ENCODE measurements at regions of chr7 and their contacts with region 1.

Region 1: DNA sequence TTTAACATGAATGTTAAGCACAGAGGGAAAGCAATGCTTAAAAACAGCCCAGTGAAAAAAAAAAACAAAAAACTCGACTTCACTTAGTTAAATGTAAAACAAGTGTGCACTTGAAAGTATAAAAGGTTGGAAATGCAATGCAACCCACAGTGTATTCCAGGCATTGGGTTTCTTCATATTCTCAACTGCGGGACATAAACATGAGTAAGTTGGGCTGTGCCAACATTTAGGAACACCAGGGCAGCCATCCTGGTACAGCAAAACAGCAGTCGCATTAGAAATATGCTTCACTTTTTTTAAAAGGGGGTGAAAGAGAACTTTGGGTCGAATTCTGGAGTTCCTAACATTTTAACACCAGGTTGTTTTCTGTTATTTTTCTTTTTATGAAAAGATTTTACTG is 937 bp downstream of the STEAP1 start:
- DNase-seq: no peak
- ATAC-seq: no peak
- H3K4me3 ChIP-seq: peak overlapping the region; percentile 53
- H3K27ac ChIP-seq: peak overlapping the region; percentile 79 to 94; a peak in 3 of 6 replicates
- H3K4me1 ChIP-seq: peaks cover 5% of the 10 kb centered on the region; the same call in 1 of the 3 replicates
- CTCF ChIP-seq: no peak
- EP300 ChIP-seq: no peak
- POLR2A ChIP-seq: no peak
- RAD21 ChIP-seq: no peak

Region 2: GRCh38 chr7:90178679-90179278 is 23.6 kb after region 1 on chr7:
- CTCF ChIA-PET with region 1: interaction called, 10 read pairs
- POLR2A ChIA-PET with region 1: interaction called, 5 read pairs
- DNase-seq: peak; percentile 25 to 60
- ATAC-seq: peak; percentile 86 to 91
- H3K4me3 ChIP-seq: no peak overlapping the region
- H3K27ac ChIP-seq: peak overlapping the region; percentile 67 to 85
- H3K4me1 ChIP-seq: peaks cover 45% of the 10 kb centered on the region
- CTCF ChIP-seq: no peak
- EP300 ChIP-seq: no peak
- POLR2A ChIP-seq: no peak
- RAD21 ChIP-seq: no peak

Region 3: GRCh38 chr7:90211391-90212148 is 56.4 kb after region 1 on chr7 and contains the start of gene STEAP2:
- CTCF ChIA-PET with region 1: interaction called, 38 read pairs
- POLR2A ChIA-PET with region 1: interaction called, 20 read pairs
- DNase-seq: peak; percentile 82 to 94
- ATAC-seq: peak; percentile 98
- H3K4me3 ChIP-seq: peak within 1 kb of the TSS; percentile 74
- H3K27ac ChIP-seq: peak within 1 kb of the TSS; percentile 95 to 97
- H3K4me1 ChIP-seq: peaks cover 13% of the 10 kb centered on the region; the same call in 1 of the 3 replicates
- CTCF ChIP-seq: peak; percentile 38; the same call in 2 of the 3 replicates
- EP300 ChIP-seq: no peak
- POLR2A ChIP-seq: peak; percentile 65
- RAD21 ChIP-seq: peak; percentile 34 to 60; a peak in 4 of 5 replicates
- polyA plus RNA-seq, gene STEAP2: 49.2 and 51.9 TPM in 2 replicates

Region 4: DNA sequence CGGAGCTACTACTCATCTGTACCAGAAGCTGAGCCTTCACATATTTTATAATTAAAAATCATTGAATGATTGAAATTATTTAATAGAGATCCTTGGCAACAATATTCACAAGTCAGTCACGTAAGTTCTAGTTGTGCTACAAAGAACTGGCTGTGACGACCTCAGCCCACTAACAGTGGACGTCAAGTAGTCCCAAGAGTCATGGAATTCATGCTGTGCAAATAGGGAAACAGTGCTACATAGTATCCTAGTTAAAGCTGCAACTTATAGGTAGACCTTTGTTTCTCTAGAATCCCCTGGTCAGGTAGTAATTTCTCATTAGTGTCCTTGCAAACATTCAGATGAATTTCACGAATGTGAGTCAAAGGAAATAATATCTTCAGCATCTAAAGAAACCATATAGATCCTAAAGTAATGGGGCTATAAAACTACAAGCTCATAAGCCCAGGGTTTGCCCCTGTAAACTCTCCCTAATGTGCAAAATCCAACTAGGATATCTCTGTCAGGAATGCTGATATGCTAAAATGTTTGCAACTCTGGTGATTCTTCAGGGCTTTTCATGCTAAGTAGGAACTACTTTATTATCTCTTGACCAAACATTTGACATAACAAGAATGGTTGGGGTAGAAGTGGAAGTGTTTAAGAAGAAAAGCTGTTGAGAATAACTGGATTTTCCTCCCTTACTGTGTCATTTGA is 121.0 kb after region 1 on chr7:
- CTCF ChIA-PET with region 1: interaction called, 14 read pairs
- POLR2A ChIA-PET with region 1: no interaction called
- DNase-seq: no peak
- ATAC-seq: no peak
- H3K4me3 ChIP-seq: no peak overlapping the region
- H3K27ac ChIP-seq: no peak overlapping the region
- H3K4me1 ChIP-seq: no peaks in the 10 kb centered on the region
- CTCF ChIP-seq: no peak
- EP300 ChIP-seq: no peak
- POLR2A ChIP-seq: no peak
- RAD21 ChIP-seq: no peak

Region 5: DNA sequence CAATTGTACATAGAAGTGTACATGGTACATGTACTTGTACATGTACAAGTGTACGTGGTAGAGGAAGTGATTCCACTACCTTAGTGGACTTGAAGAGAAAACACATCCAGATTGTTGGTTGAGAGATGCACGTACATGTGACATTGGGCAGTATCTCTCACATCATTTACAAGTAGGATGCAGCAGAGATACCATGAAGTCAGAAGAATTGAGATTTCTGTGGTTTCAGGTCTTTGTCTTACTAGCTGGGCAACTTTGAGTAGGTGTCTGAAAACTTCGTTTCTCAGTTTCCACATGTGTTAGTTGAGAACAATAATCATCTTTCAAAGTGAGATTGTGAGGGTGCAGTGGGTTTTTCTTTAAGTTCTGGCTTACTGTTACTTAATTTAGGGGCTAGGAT is 269.5 kb after region 1 on chr7:
- CTCF ChIA-PET with region 1: interaction called, 12 read pairs
- POLR2A ChIA-PET with region 1: no interaction called
- DNase-seq: no peak
- ATAC-seq: no peak
- H3K4me3 ChIP-seq: no peak overlapping the region
- H3K27ac ChIP-seq: no peak overlapping the region; a peak in 1 of 6 replicates
- H3K4me1 ChIP-seq: peaks cover 6% of the 10 kb centered on the region; the same call in 2 of the 3 replicates
- CTCF ChIP-seq: no peak
- EP300 ChIP-seq: no peak
- POLR2A ChIP-seq: no peak
- RAD21 ChIP-seq: no peak

Measured in A549 (cell line).